Mammary epithelial cell (primary cell): ENCODE measurements at regions of chr1 and their contacts with region 1.

Region 1: GRCh38 chr1:24805534-24806301 is 60.5 kb downstream of the CLIC4 start:
- DNase-seq: peak; percentile 74
- H3K4me3 ChIP-seq: no peak overlapping the region
- H3K27ac ChIP-seq: no peak overlapping the region
- H3K4me1 ChIP-seq: peaks cover 12% of the 10 kb centered on the region
- H3K27me3 ChIP-seq: no peaks in the 10 kb centered on the region
- CTCF ChIP-seq: no peak

Region 2: DNA sequence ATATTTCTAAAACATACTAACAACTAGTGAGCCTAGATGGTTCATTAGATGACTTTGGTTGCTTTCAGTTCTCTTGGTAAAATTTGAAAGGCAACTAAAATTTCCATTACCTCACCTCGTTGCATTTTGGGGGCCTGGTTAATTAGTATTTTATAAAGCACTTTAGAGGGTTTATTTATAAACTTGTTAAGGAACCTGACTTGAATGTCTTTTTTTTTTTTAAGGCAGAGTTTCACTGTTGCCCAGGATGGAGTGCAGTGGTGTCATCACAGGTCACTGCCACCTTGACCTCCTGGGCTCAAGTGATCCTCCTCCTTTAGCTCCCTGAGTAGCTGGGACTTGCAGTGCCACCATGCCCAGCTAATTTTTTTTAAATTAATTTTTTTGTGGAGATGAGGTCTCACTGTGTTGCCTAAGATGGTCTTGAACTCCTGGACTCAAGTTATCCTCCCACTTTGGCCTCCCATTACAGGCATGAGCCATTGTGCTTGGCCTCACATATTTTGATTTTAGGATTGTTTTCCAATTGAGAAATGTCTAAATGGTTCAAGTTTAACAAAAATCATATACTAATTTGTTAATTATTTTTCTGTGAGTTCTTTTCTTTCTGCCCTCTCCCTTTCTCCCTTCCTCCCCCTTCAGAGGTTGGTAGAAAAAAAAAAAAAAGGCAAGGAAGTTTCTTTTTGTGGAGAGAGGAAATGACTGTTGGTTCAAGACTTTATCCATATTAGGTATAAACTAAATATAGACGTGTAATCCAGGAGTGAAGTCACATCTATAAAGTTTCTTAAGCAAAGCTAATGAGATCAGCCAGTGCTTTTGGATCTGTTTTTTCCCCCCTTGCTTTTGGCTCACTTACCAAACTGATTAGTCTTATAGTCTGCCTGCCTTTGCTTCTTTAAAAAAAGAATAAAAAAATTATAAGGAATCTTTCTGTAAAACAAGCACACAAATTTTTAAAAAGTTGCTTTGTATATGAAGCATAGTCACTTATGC is 35.8 kb before region 1 on chr1:
- CTCF ChIA-PET with region 1: no interaction called
- dilution Hi-C with region 1: loop called (anchors 5 kb)
- in situ Hi-C with region 1: no loop called
- intact Hi-C with region 1: no loop called
- DNase-seq: peak; percentile 84
- H3K4me3 ChIP-seq: no peak overlapping the region
- H3K27ac ChIP-seq: peak overlapping the region; percentile 68
- H3K4me1 ChIP-seq: peaks cover 25% of the 10 kb centered on the region
- H3K27me3 ChIP-seq: no peaks in the 10 kb centered on the region
- CTCF ChIP-seq: no peak

Region 3: GRCh38 chr1:24822887-24823286 is 17.2 kb after region 1 on chr1:
- CTCF ChIA-PET with region 1: no interaction called
- dilution Hi-C with region 1: no loop called
- in situ Hi-C with region 1: no loop called
- intact Hi-C with region 1: no loop called
- DNase-seq: no peak
- H3K4me3 ChIP-seq: no peak overlapping the region
- H3K27ac ChIP-seq: no peak overlapping the region
- H3K4me1 ChIP-seq: no peaks in the 10 kb centered on the region
- H3K27me3 ChIP-seq: no peaks in the 10 kb centered on the region
- CTCF ChIP-seq: no peak

Region 4: GRCh38 chr1:24841593-24841992 is 35.9 kb after region 1 on chr1:
- CTCF ChIA-PET with region 1: no interaction called
- dilution Hi-C with region 1: loop called (anchors 5 kb)
- in situ Hi-C with region 1: no loop called
- intact Hi-C with region 1: no loop called
- DNase-seq: no peak
- H3K4me3 ChIP-seq: no peak overlapping the region
- H3K27ac ChIP-seq: no peak overlapping the region
- H3K4me1 ChIP-seq: no peaks in the 10 kb centered on the region
- H3K27me3 ChIP-seq: no peaks in the 10 kb centered on the region
- CTCF ChIP-seq: no peak